Cardiac septum (tissue), 1 donor: ENCODE measurements at regions of chr3 and their contacts with region 1.

Region 1: GRCh38 chr3:113495035-113495434 is 19.9 kb downstream of the SPICE1 start:
- DNase-seq: no peak

Region 2: GRCh38 chr3:113535898-113536297 is 40.9 kb after region 1 on chr3:
- intact Hi-C with region 1: no loop called
- DNase-seq: no peak

Region 3: GRCh38 chr3:113546414-113546893 is 51.4 kb after region 1 on chr3:
- intact Hi-C with region 1: no loop called
- DNase-seq: no peak

Region 4: GRCh38 chr3:113575206-113575605 is 80.2 kb after region 1 on chr3:
- intact Hi-C with region 1: loop called (anchors 5 kb)
- DNase-seq: no peak

Region 5: DNA sequence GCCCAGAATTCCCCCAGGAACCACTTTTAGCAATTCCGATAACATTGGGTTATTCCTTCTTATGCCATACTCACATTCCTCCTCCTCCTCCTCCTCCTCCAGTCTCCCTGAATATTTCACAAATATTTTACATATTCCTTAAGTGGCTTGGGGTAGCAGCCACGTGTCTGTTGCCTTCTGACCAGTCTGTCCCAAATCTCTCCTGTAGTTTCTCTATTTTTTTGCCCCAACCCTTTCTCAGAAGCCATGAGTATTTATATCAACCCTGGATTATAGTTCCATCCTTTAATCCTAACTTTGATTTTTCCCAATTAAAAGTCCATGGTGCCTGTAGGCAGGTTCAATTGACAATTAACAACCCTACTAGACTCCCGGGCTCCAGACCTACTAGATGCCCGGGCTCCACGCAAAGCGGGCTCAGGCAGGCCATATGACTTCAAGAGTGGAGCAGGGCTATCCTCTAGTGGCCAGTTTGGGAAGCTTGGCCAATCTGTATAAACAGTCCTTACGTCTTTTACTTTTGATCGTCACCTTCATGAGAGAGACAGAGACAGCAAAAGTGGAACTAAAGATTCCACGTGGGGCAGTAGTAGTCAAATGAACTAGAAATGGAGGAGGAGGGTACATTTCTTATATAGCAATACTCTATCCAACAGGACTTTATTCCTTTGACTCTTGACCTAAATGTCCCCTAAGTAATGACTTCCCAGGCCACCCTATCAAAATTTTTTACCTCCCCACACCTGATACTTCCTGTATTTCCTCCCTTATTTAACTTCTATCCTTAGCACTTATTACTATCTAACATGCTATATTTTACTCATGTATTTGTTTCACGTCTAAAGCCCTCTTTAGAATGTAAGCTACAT is 131.7 kb after region 1 on chr3:
- intact Hi-C with region 1: loop called (anchors 2 kb)
- DNase-seq: no peak